ENCODE measurements at regions of chr18 and their contacts with region 1.

Region 1: DNA sequence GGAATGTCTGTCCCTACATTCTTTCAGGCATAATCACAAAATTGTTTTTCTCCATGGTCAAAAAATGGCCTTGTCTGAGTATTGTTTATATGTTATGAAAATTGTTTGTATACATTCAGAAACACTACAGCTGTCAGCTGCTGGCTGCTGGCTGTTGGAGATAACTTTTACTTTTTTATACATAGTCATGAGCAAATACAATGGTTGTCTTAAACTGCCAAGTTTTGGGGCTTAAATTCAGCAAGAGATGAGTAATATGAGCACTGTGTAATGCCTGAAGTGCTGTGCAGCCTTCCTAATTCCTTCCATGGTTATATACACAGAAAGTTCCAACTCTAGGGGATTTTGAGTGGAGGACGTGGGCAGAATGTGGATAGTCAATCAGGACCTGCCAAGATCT is 168.9 kb upstream of the RMP24 start:
- DNase-seq: no peak
- CTCF ChIP-seq: no peak

Region 2: GRCh38 chr18:35240664-35241447 is 562.7 kb before region 1 on chr18 and contains the start of gene ZNF397:
- CTCF ChIA-PET with region 1: no interaction called
- POLR2A ChIA-PET with region 1: interaction called, 11 read pairs
- DNase-seq: peak; percentile 97
- CTCF ChIP-seq: no peak

Region 3: GRCh38 chr18:35817604-35818352 is 14.2 kb after region 1 on chr18:
- CTCF ChIA-PET with region 1: no interaction called
- POLR2A ChIA-PET with region 1: no interaction called
- DNase-seq: no peak
- CTCF ChIP-seq: no peak

Region 4: DNA sequence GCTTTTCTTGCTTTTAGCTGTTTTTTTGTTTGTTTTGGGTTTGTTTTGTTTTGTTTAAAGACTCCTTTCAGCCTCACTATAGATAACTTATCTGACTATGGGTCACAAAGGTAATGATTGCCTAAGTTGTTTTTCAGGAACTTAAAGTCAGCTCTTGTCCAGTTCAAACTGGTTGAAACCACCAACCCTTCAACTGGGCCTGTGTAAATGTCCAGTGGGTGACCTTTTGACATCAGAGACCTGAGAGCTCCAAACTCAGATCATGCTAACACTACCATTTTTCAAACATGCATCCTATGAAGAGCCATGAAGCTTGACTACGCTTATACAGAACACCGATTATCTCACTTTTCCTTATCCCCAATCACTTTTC is 24.3 kb after region 1 on chr18:
- CTCF ChIA-PET with region 1: no interaction called
- POLR2A ChIA-PET with region 1: no interaction called
- DNase-seq: no peak
- CTCF ChIP-seq: no peak

Region 5: GRCh38 chr18:35962320-35962719 is 158.8 kb after region 1 on chr18:
- CTCF ChIA-PET with region 1: no interaction called
- POLR2A ChIA-PET with region 1: no interaction called
- DNase-seq: no peak
- CTCF ChIP-seq: no peak

Measured in GM10248 (cell line).